Right cardiac atrium (tissue), 5 donors: ENCODE measurements at regions of chr2 and their contacts with region 1.

Region 1: GRCh38 chr2:37890893-37891495 is 34.1 kb upstream of the RMDN2 start:
- DNase-seq: peak; percentile 67 to 81 (median 79)
- ATAC-seq: peak; percentile 89
- H3K4me3 ChIP-seq: no peak overlapping the region
- H3K27ac ChIP-seq: no peak overlapping the region
- H3K4me1 ChIP-seq: peaks cover 4% of the 10 kb centered on the region
- H3K27me3 ChIP-seq: no peaks in the 10 kb centered on the region

Region 2: GRCh38 chr2:37394796-37395555 is 496.0 kb before region 1 on chr2:
- intact Hi-C with region 1: loop called in 1 of 4 experiments (anchors 5 kb)
- DNase-seq: no peak
- ATAC-seq: peak; percentile 39 to 88
- H3K4me3 ChIP-seq: no peak overlapping the region
- H3K27ac ChIP-seq: no peak overlapping the region
- H3K4me1 ChIP-seq: no peaks in the 10 kb centered on the region
- H3K27me3 ChIP-seq: no peaks in the 10 kb centered on the region

Region 3: GRCh38 chr2:38274286-38275276 is 383.6 kb after region 1 on chr2:
- intact Hi-C with region 1: loop called in 1 of 4 experiments (anchors 10 kb)
- DNase-seq: no peak
- ATAC-seq: peak; percentile 63 to 86
- H3K4me3 ChIP-seq: no peak overlapping the region
- H3K27ac ChIP-seq: no peak overlapping the region
- H3K4me1 ChIP-seq: no peaks in the 10 kb centered on the region
- H3K27me3 ChIP-seq: no peaks in the 10 kb centered on the region